ENCODE measurements at regions of chr19 and their contacts with region 1.

Region 1: GRCh38 chr19:42512743-42513304 is 15.5 kb downstream of the CEACAM1 start:
- DNase-seq: peak; percentile 71
- ATAC-seq: peak; percentile 96
- H3K4me3 ChIP-seq: no peak overlapping the region
- H3K27ac ChIP-seq: peak overlapping the region; percentile 71
- H3K4me1 ChIP-seq: peaks cover 52% of the 10 kb centered on the region
- H3K27me3 ChIP-seq: no peaks in the 10 kb centered on the region
- CTCF ChIP-seq: 0 out of 6 replicates have a peak, but pooled peaks of 1 of the 3 experiments have one; percentile 11
- EP300 ChIP-seq: peak; percentile 26 to 68
- POLR2A ChIP-seq: no peak
- RAD21 ChIP-seq: no peak

Region 2: GRCh38 chr19:42497492-42498168 is 15.2 kb before region 1 on chr19:
- CTCF ChIA-PET with region 1: interaction called, 11 read pairs
- POLR2A ChIA-PET with region 1: interaction called, 27 read pairs
- RAD21 ChIA-PET with region 1: interaction called, 25 read pairs
- SMC1A ChIA-PET with region 1: interaction called, 78 read pairs
- in situ Hi-C with region 1: no loop called
- intact Hi-C with region 1: loop called (anchors 2 kb)
- DNase-seq: peak; percentile 60
- ATAC-seq: peak; percentile 86
- H3K4me3 ChIP-seq: peak overlapping the region; percentile 9; the same call in 1 of the 2 replicates
- H3K27ac ChIP-seq: peak overlapping the region; percentile 80
- H3K4me1 ChIP-seq: peaks cover 28% of the 10 kb centered on the region
- H3K27me3 ChIP-seq: no peaks in the 10 kb centered on the region
- CTCF ChIP-seq: no peak
- EP300 ChIP-seq: peak; percentile 66 to 78; a peak in 3 of 4 replicates
- POLR2A ChIP-seq: no peak
- RAD21 ChIP-seq: 0 out of 2 replicates have a peak, but pooled peaks have one; percentile 8

Measured in GM12878 (cell line).